Upper lobe of right lung (tissue), 1 donor: ENCODE measurements at regions of chr11 and their contacts with region 1.

Region 1: GRCh38 chr11:126716456-126717083 is 284.0 kb downstream of the KIRREL3 start:
- DNase-seq: no peak
- ATAC-seq: peak; percentile 73
- H3K4me3 ChIP-seq: no peak overlapping the region
- H3K27ac ChIP-seq: no peak overlapping the region
- H3K4me1 ChIP-seq: no peaks in the 10 kb centered on the region
- H3K27me3 ChIP-seq: peaks cover 12% of the 10 kb centered on the region
- CTCF ChIP-seq: peak; percentile 62

Region 2: GRCh38 chr11:126874831-126875230 is 158.3 kb after region 1 on chr11:
- intact Hi-C with region 1: no loop called
- DNase-seq: no peak
- ATAC-seq: peak; percentile 19
- H3K4me3 ChIP-seq: no peak overlapping the region
- H3K27ac ChIP-seq: no peak overlapping the region
- H3K4me1 ChIP-seq: no peaks in the 10 kb centered on the region
- H3K27me3 ChIP-seq: no peaks in the 10 kb centered on the region
- CTCF ChIP-seq: no peak

Region 3: DNA sequence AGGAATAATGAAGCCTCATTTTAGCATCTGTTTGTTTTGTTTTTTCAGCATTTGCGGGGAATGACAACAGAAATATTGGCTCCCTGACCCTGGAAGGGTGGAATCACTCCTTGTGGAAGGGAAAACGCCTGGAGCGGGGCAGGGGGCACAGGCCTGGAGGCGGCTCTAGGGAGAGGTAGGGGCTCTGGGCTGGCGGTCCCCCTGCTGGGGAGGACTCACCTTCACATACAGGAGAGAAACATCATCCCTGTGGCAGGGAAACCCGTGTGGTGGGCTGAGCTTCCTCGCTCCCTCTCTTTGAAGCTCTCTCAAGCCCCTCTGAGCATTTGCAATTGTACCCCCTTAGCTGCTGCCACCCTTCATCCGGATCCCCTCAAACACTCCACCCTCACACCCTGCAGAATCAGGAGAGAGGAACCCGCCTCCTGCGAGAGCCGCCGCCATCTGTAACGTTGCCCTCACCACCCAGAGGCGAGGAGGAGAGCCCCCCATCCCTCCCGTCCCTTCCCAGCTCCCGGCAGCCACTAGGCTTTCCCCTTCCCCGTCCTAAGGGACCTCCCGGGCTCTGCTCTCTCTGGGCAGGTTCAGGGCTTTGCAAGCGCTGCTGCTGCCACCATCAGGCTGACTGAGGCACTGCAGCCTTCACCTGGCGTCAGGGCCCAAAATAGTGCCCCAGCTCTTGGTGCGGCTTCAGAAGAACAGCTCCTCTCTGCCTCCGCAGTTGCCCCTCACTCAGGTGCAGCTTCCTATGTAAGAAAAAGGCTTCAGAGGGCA is 273.6 kb after region 1 on chr11:
- intact Hi-C with region 1: loop called (anchors 10 kb)
- DNase-seq: peak; percentile 86
- ATAC-seq: peak; percentile 92
- H3K4me3 ChIP-seq: no peak overlapping the region
- H3K27ac ChIP-seq: no peak overlapping the region
- H3K4me1 ChIP-seq: no peaks in the 10 kb centered on the region
- H3K27me3 ChIP-seq: peaks cover 5% of the 10 kb centered on the region
- CTCF ChIP-seq: peak; percentile 93